ENCODE measurements at regions of chr11 and their contacts with region 1.

Region 1: DNA sequence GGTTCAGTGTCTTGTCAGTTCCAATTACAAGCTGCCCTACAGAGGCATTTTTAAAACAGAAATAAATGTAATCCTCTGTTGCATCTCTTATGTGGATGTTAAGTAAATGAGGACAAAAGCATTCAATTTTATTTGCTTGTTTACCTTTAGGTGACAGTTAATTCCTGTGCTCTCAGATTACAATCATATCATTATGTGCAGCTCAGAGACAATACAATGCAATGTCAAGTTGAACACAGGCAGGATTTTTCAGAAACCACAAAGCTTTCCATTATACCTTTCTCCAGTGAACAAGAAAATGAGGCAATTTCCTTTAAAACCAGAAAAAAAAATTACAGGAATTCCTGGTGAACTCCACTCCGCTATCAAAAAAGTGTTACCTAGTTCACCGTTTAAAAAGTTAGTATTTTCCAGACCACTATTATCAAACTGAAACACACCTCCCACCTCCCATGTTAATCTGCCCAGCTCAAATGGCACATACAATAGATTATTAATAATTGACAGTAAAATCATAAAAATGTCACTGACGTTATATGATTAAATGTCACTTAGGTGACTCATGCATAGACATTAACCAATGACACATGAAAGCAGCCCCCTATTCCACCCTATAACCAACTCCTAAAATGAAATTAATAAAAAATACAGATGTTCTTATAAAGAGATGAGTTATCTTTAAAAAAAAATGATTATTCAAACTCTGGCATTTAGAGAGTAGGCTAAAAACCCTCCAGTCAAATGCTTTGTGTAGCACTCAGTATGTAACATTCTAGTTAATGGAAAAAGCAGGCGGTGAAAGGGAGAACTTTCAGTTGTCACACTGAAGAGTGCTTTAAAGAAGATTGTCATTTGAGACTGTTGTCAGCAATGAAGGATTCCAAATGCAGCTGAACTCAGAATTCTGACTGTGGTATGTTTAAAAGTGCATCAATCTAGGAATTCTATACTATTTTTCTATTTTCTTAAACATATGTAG is 98.6 kb downstream of the MUC15 start:
- DNase-seq: no peak
- ATAC-seq: no peak
- H3K4me3 ChIP-seq: no peak overlapping the region
- H3K4me3 Mint-ChIP-seq: no peak overlapping the region
- H3K27ac ChIP-seq: no peak overlapping the region
- H3K27ac Mint-ChIP-seq: no peak overlapping the region
- H3K4me1 ChIP-seq: no peaks in the 10 kb centered on the region
- H3K4me1 Mint-ChIP-seq: no peaks in the 10 kb centered on the region
- H3K27me3 ChIP-seq: no peaks in the 10 kb centered on the region
- H3K27me3 Mint-ChIP-seq: no peaks in the 10 kb centered on the region
- CTCF ChIP-seq: no peak

Region 2: DNA sequence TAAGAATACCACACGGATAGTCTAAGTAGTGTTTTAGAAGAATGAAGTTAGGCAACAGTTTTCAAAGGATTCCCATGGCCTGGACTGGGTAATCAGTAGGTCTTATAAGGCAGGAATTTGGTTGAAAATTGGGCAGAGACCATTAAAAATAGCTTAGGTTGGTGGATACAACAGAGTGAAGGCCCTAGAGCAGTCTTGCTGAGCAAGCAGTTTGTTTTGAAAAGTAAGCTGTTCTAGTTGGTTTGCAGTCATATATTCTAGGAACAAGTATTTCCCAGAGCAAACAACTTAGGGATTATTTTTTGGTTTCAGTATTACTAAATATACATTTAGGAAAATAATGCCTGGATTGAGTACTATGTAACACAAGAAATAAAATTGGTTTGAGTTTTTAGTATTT is 33.7 kb after region 1 on chr11:
- CTCF ChIA-PET with region 1: no interaction called
- POLR2A ChIA-PET with region 1: no interaction called
- intact Hi-C with region 1: loop called in 1 of 2 experiments (anchors 1 kb)
- DNase-seq: no peak
- ATAC-seq: no peak
- H3K4me3 ChIP-seq: no peak overlapping the region
- H3K4me3 Mint-ChIP-seq: no peak overlapping the region
- H3K27ac ChIP-seq: no peak overlapping the region
- H3K27ac Mint-ChIP-seq: no peak overlapping the region
- H3K4me1 ChIP-seq: no peaks in the 10 kb centered on the region
- H3K4me1 Mint-ChIP-seq: no peaks in the 10 kb centered on the region
- H3K27me3 ChIP-seq: no peaks in the 10 kb centered on the region
- H3K27me3 Mint-ChIP-seq: no peaks in the 10 kb centered on the region
- CTCF ChIP-seq: no peak